Aorta (tissue), 5 donors: ENCODE measurements at regions of chr15 and their contacts with region 1.

Region 1: GRCh38 chr15:89206908-89207331 is 14.5 kb downstream of the RLBP1 start:
- DNase-seq: peak; percentile 79 to 90
- ATAC-seq: peak; percentile 90
- H3K4me3 ChIP-seq: no peak overlapping the region
- H3K27ac ChIP-seq: no peak overlapping the region
- H3K4me1 ChIP-seq: no peaks in the 10 kb centered on the region
- H3K27me3 ChIP-seq: no peaks in the 10 kb centered on the region

Region 2: DNA sequence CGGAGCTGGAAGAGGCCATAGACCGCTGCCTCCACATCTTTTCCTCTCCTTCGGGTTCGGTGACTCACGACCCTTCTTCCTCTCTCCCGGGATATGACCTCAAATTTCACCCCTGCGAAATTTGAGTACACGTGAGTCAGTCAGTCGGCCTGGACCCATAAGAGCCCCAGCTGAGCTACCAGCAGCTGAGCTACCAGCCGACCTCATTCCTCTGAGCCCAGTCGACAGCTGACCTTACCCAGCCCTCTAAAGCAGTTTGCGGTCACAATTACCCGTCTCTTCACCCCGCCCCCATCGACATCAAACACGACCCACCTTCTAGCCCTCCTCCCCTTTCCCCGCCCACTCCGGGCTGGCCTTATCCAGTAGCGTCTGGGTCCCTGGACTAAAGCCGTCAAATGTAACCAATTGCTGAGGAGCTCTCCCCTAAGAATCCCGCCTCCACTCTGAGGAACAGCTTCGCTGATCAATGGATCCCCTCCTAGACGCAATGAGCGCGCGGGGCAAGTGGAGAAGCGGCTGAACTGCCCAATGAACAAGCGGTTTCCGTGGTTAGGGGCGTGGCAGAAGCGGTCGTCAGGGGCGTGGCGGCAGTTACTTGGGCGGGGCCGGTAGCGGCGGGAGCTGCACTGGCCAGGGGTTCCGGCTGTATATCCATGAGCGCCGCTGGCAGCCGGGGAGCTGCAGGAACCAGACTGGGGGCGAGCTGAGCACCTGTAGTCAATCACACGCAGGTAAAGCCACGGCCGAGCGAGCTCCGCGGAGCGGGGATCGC is 118.9 kb before region 1 on chr15 and contains the start of gene ABHD2:
- intact Hi-C with region 1: no loop called
- DNase-seq: peak; percentile 99 to 100
- ATAC-seq: peak; percentile 97
- H3K4me3 ChIP-seq: peak within 1 kb of the TSS; percentile 74 to 93
- H3K27ac ChIP-seq: peak within 1 kb of the TSS; percentile 88 to 97
- H3K4me1 ChIP-seq: peaks cover 0 to 3% of the 10 kb centered on the region in 2 donors
- H3K27me3 ChIP-seq: no peaks in the 10 kb centered on the region
- total RNA-seq, gene ABHD2: 135 to 221 TPM

Region 3: GRCh38 chr15:89150762-89151664 is 55.9 kb before region 1 on chr15:
- intact Hi-C with region 1: no loop called
- DNase-seq: no peak
- ATAC-seq: no peak
- H3K4me3 ChIP-seq: no peak overlapping the region
- H3K27ac ChIP-seq: no peak overlapping the region
- H3K4me1 ChIP-seq: peaks cover 0 to 1% of the 10 kb centered on the region in 2 donors
- H3K27me3 ChIP-seq: no peaks in the 10 kb centered on the region

Region 4: GRCh38 chr15:89243691-89244471 is 37.0 kb after region 1 on chr15 and contains the start of gene FANCI:
- intact Hi-C with region 1: loop called in 1 of 2 experiments (anchors 2 kb)
- DNase-seq: peak; percentile 96 to 99
- ATAC-seq: peak; percentile 98
- H3K4me3 ChIP-seq: peak within 1 kb of the TSS; percentile 37 to 71
- H3K27ac ChIP-seq: no peak within 1 kb of the TSS
- H3K4me1 ChIP-seq: no peaks in the 10 kb centered on the region
- H3K27me3 ChIP-seq: no peaks in the 10 kb centered on the region
- total RNA-seq, gene FANCI: 6.2 to 9.1 TPM

Region 5: DNA sequence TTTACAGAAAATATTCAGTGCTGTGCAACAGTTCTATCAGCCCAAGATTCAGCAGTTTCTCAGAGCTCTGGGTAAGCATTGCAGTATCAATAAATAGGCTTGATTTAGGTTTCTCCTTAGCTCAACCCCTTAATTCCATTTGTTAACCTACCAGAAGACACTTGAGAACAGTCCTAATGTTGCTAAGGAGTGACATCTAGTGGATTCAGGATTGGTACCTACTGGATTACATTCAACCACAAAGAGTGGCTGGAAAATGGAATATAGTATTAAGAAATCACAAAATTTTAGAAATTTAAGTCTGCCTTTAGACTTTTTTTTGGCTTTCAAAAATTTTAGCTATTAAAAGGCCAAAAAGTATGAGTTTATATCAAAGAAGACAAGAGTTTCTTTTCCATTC is 93.0 kb after region 1 on chr15:
- intact Hi-C with region 1: loop called in 1 of 2 experiments (anchors 5 kb)
- DNase-seq: no peak
- ATAC-seq: no peak
- H3K4me3 ChIP-seq: no peak overlapping the region
- H3K27ac ChIP-seq: no peak overlapping the region
- H3K4me1 ChIP-seq: no peaks in the 10 kb centered on the region
- H3K27me3 ChIP-seq: no peaks in the 10 kb centered on the region

Region 6: GRCh38 chr15:89430530-89431341 is 223.8 kb after region 1 on chr15:
- intact Hi-C with region 1: loop called (anchors 10 kb)
- DNase-seq: peak; percentile 88 to 96
- ATAC-seq: peak; percentile 93
- H3K4me3 ChIP-seq: peak overlapping the region in 1 of 2 donors; percentile 6
- H3K27ac ChIP-seq: no peak overlapping the region
- H3K4me1 ChIP-seq: no peaks in the 10 kb centered on the region
- H3K27me3 ChIP-seq: peaks cover 0 to 2% of the 10 kb centered on the region in 2 donors